ENCODE measurements at regions of chr13 and their contacts with region 1.

Region 1: GRCh38 chr13:50130123-50130946 is 115.1 kb downstream of the KCNRG start:
- DNase-seq: no peak
- ATAC-seq: peak; percentile 47
- H3K4me3 ChIP-seq: peak overlapping the region; percentile 50; the same call in 1 of the 2 replicates
- H3K27ac ChIP-seq: no peak overlapping the region
- H3K4me1 ChIP-seq: peaks cover 51% of the 10 kb centered on the region
- H3K27me3 ChIP-seq: peaks cover 13 to 31% of the 10 kb centered on the region in 2 experiments
- CTCF ChIP-seq: no peak
- EP300 ChIP-seq: no peak
- POLR2A ChIP-seq: no peak
- RAD21 ChIP-seq: no peak

Region 2: DNA sequence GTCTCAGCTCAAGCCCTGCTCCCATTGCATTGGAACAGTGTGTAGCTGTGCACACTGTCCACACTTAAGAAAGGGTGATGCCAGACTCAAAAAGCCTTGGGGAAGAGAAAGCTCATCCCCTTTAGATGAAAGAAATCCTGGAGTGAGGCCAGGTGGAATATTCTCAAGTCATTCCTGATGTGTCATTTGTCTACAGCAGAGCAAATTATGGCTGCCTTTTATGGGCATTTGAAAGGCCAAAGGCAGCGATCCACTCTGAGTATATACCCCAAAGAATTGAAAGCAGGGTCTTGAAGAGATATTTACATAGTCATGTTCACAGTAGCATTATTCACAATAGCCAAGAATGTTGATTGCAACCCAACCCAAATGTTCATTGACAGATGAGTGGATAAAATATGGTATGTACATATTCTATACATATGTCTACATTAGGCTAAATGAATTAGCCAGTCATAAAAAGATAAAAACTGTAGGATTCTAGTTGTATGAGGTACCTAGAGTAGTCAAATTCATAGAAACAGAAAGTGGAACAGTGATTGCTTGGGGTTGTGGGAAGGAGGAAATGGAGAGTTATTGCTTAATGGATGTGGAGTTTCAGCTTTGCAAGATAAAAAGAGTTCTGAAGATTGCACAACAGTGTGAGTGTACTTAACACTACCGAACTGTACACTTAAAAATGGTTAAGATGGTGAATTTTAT is 99.8 kb after region 1 on chr13:
- CTCF ChIA-PET with region 1: no interaction called
- POLR2A ChIA-PET with region 1: no interaction called
- RAD21 ChIA-PET with region 1: no interaction called
- SMC1A ChIA-PET with region 1: no interaction called
- in situ Hi-C with region 1: loop called (anchors 5 kb)
- intact Hi-C with region 1: no loop called
- DNase-seq: no peak
- ATAC-seq: no peak
- H3K4me3 ChIP-seq: no peak overlapping the region
- H3K27ac ChIP-seq: no peak overlapping the region
- H3K4me1 ChIP-seq: peaks cover 14% of the 10 kb centered on the region
- H3K27me3 ChIP-seq: no peaks in the 10 kb centered on the region
- CTCF ChIP-seq: no peak
- EP300 ChIP-seq: no peak
- POLR2A ChIP-seq: no peak
- RAD21 ChIP-seq: no peak

Region 3: GRCh38 chr13:50268500-50268899 is 138.2 kb after region 1 on chr13:
- CTCF ChIA-PET with region 1: no interaction called
- POLR2A ChIA-PET with region 1: no interaction called
- RAD21 ChIA-PET with region 1: no interaction called
- SMC1A ChIA-PET with region 1: no interaction called
- in situ Hi-C with region 1: no loop called
- intact Hi-C with region 1: no loop called
- DNase-seq: no peak
- ATAC-seq: no peak
- H3K4me3 ChIP-seq: no peak overlapping the region
- H3K27ac ChIP-seq: no peak overlapping the region
- H3K4me1 ChIP-seq: no peaks in the 10 kb centered on the region
- H3K27me3 ChIP-seq: no peaks in the 10 kb centered on the region
- CTCF ChIP-seq: no peak
- EP300 ChIP-seq: no peak
- POLR2A ChIP-seq: no peak
- RAD21 ChIP-seq: no peak

Measured in GM12878 (cell line).